CD4-positive, alpha-beta memory T cell (primary cell): ENCODE measurements at regions of chr20 and their contacts with region 1.

Region 1: GRCh38 chr20:62900052-62900691 is 26.1 kb downstream of the DIDO1 start:
- DNase-seq: peak; percentile 76 to 80 (median 77)
- H3K4me3 ChIP-seq: no peak overlapping the region
- H3K4me3 Mint-ChIP-seq: peak overlapping the region in 6 of 8 donors; percentile 55 to 85 (median 66)
- H3K27ac ChIP-seq: peak overlapping the region; percentile 22
- H3K27ac Mint-ChIP-seq: peak overlapping the region; percentile 39 to 90 (median 86)
- H3K4me1 ChIP-seq: peaks cover 28% of the 10 kb centered on the region
- H3K4me1 Mint-ChIP-seq: peaks cover 21 to 44% (median 33%) of the 10 kb centered on the region in 4 donors
- H3K27me3 ChIP-seq: no peaks in the 10 kb centered on the region
- H3K27me3 Mint-ChIP-seq: no peaks in the 10 kb centered on the region

Region 2: GRCh38 chr20:62740286-62741141 is 159.7 kb before region 1 on chr20:
- CTCF ChIA-PET with region 1: no interaction called
- POLR2A ChIA-PET with region 1: no interaction called
- intact Hi-C with region 1: no loop called
- DNase-seq: peak; percentile 80 to 96 (median 85)
- H3K4me3 ChIP-seq: peak overlapping the region in 1 of 2 donors; percentile 63
- H3K4me3 Mint-ChIP-seq: peak overlapping the region; percentile 80 to 91 (median 88)
- H3K27ac ChIP-seq: peak overlapping the region; percentile 69
- H3K27ac Mint-ChIP-seq: peak overlapping the region; percentile 82 to 98 (median 93)
- H3K4me1 ChIP-seq: peaks cover 56% of the 10 kb centered on the region
- H3K4me1 Mint-ChIP-seq: peaks cover 20 to 58% (median 40%) of the 10 kb centered on the region in 4 donors
- H3K27me3 ChIP-seq: no peaks in the 10 kb centered on the region
- H3K27me3 Mint-ChIP-seq: peaks cover 0 to 4% of the 10 kb centered on the region in 2 donors

Region 3: GRCh38 chr20:62921119-62921687 is 21.0 kb after region 1 on chr20:
- CTCF ChIA-PET with region 1: interaction called, 90 read pairs
- POLR2A ChIA-PET with region 1: interaction called, 49 read pairs
- intact Hi-C with region 1: loop called (anchors 1 kb)
- DNase-seq: peak; percentile 58 to 85 (median 62)
- H3K4me3 ChIP-seq: no peak overlapping the region
- H3K4me3 Mint-ChIP-seq: peak overlapping the region; percentile 72 to 92 (median 87)
- H3K27ac ChIP-seq: peak overlapping the region; percentile 36
- H3K27ac Mint-ChIP-seq: peak overlapping the region; percentile 82 to 95 (median 89)
- H3K4me1 ChIP-seq: peaks cover 90% of the 10 kb centered on the region
- H3K4me1 Mint-ChIP-seq: peaks cover 61 to 93% (median 77%) of the 10 kb centered on the region in 4 donors
- H3K27me3 ChIP-seq: no peaks in the 10 kb centered on the region
- H3K27me3 Mint-ChIP-seq: no peaks in the 10 kb centered on the region

Region 4: DNA sequence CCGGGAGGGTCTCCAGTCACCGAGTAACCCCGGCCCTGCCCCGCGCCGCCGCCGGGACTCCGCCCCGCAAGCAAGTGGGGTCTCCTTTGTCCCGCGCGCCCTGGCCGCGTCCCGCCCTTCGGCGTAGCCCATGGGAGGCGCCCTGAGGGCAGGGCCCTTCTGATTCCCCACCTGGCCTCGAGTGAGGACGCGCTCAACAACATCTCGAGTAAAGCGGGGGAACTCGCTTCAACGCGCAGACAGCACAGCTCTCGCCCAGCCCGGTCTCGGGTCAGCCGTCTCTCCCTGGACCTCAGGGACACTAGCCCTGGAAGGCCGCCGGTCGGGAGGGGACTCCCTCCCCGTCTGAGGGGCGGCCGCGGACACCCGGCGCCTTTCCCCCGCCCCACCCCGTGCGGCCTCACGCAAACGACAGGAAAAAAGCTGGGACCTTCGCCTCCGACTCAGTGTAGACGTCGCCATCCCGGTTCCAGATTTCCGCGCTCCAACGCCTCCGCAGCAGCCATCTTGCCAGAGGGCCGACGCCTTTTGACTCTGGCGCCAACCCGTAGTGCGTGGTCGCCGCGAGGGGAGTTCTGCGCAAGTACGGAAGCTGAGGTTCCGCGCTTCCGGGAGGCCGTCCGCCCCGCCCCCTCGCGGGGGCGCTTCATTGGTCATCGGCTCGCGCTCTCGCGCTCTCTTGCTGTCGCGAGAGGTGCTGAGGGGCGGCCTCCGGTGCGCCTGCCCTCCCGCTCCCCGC is 37.4 kb after region 1 on chr20:
- CTCF ChIA-PET with region 1: interaction called, 10 read pairs
- POLR2A ChIA-PET with region 1: interaction called, 5 read pairs
- intact Hi-C with region 1: no loop called
- DNase-seq: peak; percentile 96 to 98 (median 97)
- H3K4me3 ChIP-seq: peak overlapping the region; percentile 84 to 89
- H3K4me3 Mint-ChIP-seq: peak overlapping the region in 7 of 8 donors; percentile 91 to 99 (median 95)
- H3K27ac ChIP-seq: peak overlapping the region; percentile 86
- H3K27ac Mint-ChIP-seq: peak overlapping the region; percentile 92 to 98 (median 96)
- H3K4me1 ChIP-seq: peaks cover 71% of the 10 kb centered on the region
- H3K4me1 Mint-ChIP-seq: peaks cover 26 to 46% (median 37%) of the 10 kb centered on the region in 4 donors
- H3K27me3 ChIP-seq: no peaks in the 10 kb centered on the region
- H3K27me3 Mint-ChIP-seq: no peaks in the 10 kb centered on the region

Region 5: GRCh38 chr20:62972270-62973032 is 72.3 kb after region 1 on chr20:
- CTCF ChIA-PET with region 1: interaction called, 9 read pairs
- POLR2A ChIA-PET with region 1: no interaction called
- intact Hi-C with region 1: loop called (anchors 1 kb)
- DNase-seq: peak; percentile 78 to 83 (median 80)
- H3K4me3 ChIP-seq: no peak overlapping the region
- H3K4me3 Mint-ChIP-seq: peak overlapping the region; percentile 64 to 92 (median 75)
- H3K27ac ChIP-seq: no peak overlapping the region
- H3K27ac Mint-ChIP-seq: peak overlapping the region in 3 of 7 donors; percentile 17 to 86 (median 23)
- H3K4me1 ChIP-seq: peaks cover 12% of the 10 kb centered on the region
- H3K4me1 Mint-ChIP-seq: peaks cover 11 to 29% (median 15%) of the 10 kb centered on the region in 4 donors
- H3K27me3 ChIP-seq: peaks cover 6% of the 10 kb centered on the region
- H3K27me3 Mint-ChIP-seq: peaks cover 27 to 28% of the 10 kb centered on the region in 2 donors

Region 6: DNA sequence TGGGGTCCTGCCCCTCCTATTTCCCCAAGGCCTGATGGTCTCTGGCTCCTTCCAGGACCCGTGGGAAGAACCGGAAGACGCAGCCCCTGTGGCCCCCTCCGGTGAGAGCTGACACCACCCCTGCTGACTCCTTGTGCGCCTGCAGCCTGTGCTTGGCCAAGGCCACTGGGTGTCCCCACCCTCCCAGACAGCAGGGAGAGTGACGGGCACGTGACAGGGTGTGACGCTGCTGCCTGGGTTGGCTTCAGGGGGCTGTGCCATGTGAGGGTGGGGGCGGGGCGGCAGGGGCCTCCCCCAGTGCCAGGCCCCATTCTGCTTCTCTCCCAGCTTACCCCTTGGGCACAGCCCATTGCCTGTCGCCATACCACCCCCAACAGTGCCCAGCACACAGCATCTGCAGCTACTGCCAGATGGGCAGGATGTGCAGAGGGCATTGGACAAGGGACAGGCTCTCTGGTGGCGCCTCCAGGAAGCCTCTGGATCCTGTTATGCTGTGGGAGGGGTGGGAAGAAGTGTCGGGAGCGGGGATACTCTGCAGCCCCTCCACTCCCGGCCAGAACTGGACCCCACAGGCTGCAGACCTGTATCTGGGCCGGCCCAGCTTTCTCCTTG is 338.4 kb after region 1 on chr20:
- CTCF ChIA-PET with region 1: no interaction called
- POLR2A ChIA-PET with region 1: no interaction called
- intact Hi-C with region 1: no loop called
- DNase-seq: no peak
- H3K4me3 ChIP-seq: no peak overlapping the region
- H3K4me3 Mint-ChIP-seq: no peak overlapping the region
- H3K27ac ChIP-seq: no peak overlapping the region
- H3K27ac Mint-ChIP-seq: no peak overlapping the region
- H3K4me1 ChIP-seq: no peaks in the 10 kb centered on the region
- H3K4me1 Mint-ChIP-seq: peaks cover 0 to 14% (median 0%) of the 10 kb centered on the region in 4 donors
- H3K27me3 ChIP-seq: no peaks in the 10 kb centered on the region
- H3K27me3 Mint-ChIP-seq: peaks cover 3 to 7% of the 10 kb centered on the region in 2 donors

Region 7: GRCh38 chr20:63309261-63310071 is 409.3 kb after region 1 on chr20:
- CTCF ChIA-PET with region 1: no interaction called
- POLR2A ChIA-PET with region 1: no interaction called
- intact Hi-C with region 1: no loop called
- DNase-seq: peak in 3 of 5 donors; percentile 19 to 33 (median 31)
- H3K4me3 ChIP-seq: no peak overlapping the region
- H3K4me3 Mint-ChIP-seq: no peak overlapping the region
- H3K27ac ChIP-seq: no peak overlapping the region
- H3K27ac Mint-ChIP-seq: peak overlapping the region in 1 of 7 donors; percentile 52
- H3K4me1 ChIP-seq: no peaks in the 10 kb centered on the region
- H3K4me1 Mint-ChIP-seq: no peaks in the 10 kb centered on the region
- H3K27me3 ChIP-seq: no peaks in the 10 kb centered on the region
- H3K27me3 Mint-ChIP-seq: peaks cover 2 to 7% of the 10 kb centered on the region in 2 donors